ENCODE measurements at regions of chr10 and their contacts with region 1.

Region 1: GRCh38 chr10:7872041-7872442 is 53.7 kb downstream of the TAF3 start:
- DNase-seq: no peak
- H3K4me3 ChIP-seq: peak overlapping the region in 4 of 8 donors; percentile 4 to 35 (median 20)
- H3K27ac ChIP-seq: no peak overlapping the region
- H3K4me1 ChIP-seq: peaks cover 0 to 10% (median 4%) of the 10 kb centered on the region in 6 donors
- H3K27me3 ChIP-seq: no peaks in the 10 kb centered on the region
- CTCF ChIP-seq: peak; percentile 42 to 85 (median 71)
- POLR2A ChIP-seq: no peak

Region 2: DNA sequence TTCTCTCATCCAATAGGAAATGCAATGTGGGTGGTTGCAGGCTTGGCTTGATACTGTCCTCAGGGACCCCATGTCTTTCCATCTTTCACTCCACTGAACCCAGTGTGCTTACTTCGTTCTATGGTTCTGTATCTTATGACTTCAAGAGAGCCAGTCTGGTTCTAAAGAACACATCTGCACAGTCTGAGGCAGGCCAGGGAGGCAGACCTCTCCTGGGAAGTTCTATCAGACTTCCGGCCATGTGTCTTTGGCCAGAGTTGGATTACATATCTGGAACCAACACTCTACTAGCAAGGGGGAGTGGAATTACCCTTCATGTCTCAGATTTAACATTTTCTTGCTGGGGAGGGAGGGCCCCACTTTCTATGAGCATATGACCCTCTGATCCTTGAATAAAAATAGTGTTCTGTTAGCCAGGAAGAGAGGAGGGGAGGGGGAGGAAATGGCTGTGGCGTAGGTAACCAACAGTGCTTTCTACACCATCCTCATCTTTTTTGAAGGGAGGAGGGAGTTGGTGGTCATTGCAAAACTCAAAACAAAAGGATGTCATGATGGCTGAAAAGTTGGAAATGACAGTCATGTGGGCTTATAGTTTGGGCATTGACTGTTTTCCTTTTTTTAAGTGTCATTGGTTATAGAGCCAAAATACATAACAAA is 552.6 kb after region 1 on chr10:
- intact Hi-C with region 1: no loop called
- DNase-seq: no peak
- H3K4me3 ChIP-seq: no peak overlapping the region
- H3K27ac ChIP-seq: no peak overlapping the region
- H3K4me1 ChIP-seq: no peaks in the 10 kb centered on the region
- H3K27me3 ChIP-seq: no peaks in the 10 kb centered on the region
- CTCF ChIP-seq: no peak
- POLR2A ChIP-seq: no peak

Region 3: DNA sequence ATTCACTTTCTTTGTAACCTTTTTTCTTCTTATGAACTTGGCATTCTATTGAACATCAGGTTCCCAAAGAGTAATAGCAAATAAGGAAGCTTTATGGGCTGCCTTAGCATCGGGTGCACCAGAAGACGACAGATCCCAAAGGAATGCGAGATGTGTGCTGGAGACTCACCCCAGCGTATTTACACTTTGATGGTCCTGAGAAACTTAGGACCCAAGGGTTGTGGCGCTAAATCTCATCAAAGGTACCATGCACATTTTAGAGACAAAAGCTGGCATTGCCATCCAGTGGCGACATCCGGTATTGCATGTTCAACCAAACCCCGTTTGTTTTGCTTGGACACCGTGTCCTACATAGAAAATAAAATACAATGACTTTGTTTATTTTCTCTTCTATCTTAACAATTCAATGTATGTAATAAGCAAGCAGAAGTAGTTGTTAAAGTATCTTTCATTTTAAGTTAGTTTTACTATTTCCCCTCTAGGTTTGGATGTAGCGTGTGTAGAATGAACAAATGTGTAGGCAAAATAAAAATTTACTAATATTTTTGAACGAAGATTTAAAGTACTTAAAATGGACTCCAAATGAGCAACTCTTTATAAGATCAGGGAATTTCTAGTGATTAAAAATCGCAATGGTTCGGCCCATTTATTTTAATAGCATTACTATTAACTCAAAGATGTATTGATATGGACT is 1337.2 kb after region 1 on chr10:
- intact Hi-C with region 1: loop called (anchors 5 kb)
- DNase-seq: peak; percentile 74
- H3K4me3 ChIP-seq: no peak overlapping the region
- H3K27ac ChIP-seq: no peak overlapping the region
- H3K4me1 ChIP-seq: no peaks in the 10 kb centered on the region
- H3K27me3 ChIP-seq: peaks cover 0 to 9% (median 0%) of the 10 kb centered on the region in 7 donors
- CTCF ChIP-seq: peak; percentile 74 to 89 (median 85)
- POLR2A ChIP-seq: no peak

Region 4: DNA sequence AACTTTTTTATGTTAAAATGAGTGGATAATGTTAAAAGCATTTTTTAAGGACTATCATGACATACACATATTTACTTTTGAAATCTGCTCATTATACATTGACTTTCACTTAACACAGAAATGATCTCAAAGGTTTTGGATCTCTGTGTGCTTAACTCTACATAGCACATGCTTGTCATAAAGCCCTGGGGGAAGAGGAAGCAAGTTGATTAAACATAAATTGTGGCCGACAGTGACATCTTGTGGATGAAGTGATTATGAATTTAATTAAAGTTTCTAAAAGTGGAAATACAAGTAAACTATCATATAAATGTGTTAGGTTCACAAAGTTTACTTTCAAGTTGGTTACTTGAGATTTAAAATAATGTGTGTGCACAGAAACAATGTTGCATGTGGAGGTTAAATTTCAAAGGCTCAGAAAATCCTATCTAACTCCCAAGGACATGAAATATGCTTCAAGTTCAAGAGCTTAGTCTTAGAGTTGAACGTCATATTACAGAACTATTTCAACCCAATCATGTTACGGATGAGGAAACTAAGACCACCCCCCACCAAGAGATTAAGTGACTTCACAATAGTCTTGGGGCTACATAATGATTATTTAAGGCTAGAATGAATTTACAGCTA is 1430.2 kb after region 1 on chr10:
- intact Hi-C with region 1: loop called (anchors 10 kb)
- DNase-seq: no peak
- H3K4me3 ChIP-seq: no peak overlapping the region
- H3K27ac ChIP-seq: no peak overlapping the region
- H3K4me1 ChIP-seq: no peaks in the 10 kb centered on the region
- H3K27me3 ChIP-seq: peaks cover 0 to 3% (median 0%) of the 10 kb centered on the region in 7 donors
- CTCF ChIP-seq: peak in 5 of 11 experiments; percentile 19 to 37 (median 28)
- POLR2A ChIP-seq: no peak